ENCODE measurements at regions of chr6 and their contacts with region 1.

Region 1: DNA sequence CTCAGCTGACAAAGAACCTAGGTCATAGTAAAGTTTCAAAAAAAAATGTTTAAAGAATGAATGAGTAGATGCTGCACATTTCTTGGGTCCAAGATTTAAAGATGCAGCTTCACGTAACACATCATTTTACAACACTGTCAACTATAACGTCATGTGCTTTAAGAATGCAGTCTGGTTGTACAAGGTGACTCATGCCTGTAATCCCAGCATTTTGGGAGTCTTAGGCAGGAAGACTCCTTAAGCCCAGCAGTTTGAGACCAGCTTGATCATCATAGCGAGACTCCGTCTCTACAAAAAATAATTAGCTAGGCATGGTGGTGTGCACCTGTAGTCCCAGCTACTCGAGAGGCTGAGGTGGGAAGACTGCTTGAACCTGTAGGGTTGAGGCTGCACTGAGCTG is 21.9 kb downstream of the SLC17A5 start:
- DNase-seq: no peak
- ATAC-seq: no peak
- H3K4me3 Mint-ChIP-seq: no peak overlapping the region
- H3K27ac Mint-ChIP-seq: no peak overlapping the region
- H3K4me1 Mint-ChIP-seq: no peaks in the 10 kb centered on the region
- H3K27me3 Mint-ChIP-seq: no peaks in the 10 kb centered on the region

Region 2: DNA sequence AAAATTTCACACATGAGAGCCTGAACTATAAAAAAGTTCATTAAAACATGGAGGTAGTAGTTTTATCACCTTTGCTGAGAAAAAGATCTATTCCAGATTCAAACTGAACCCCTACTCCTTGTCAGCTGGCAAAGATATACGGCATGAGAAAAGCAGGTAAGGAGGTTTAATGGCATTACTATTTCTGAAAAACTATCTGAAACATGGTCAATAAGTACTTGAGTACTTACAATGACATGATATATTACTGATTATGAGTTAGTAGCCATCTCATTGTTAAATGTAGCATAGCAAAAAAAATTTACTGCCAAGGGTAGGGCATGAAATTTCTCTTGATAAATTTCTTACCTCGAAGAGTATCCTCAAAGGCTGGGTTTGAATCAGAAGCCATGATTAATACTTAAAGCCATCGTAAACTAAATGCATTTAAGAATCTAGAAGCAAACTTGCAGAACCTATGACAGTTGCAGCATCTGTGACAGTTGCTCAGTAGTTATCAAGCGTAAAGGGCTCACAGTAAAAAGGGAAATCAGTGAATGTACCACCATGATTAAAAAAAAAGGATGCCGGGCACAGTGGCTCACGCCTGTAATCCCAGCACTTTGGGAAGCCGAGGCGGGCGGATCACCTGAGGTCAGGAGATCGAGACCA is 13.2 kb after region 1 on chr6:
- CTCF ChIA-PET with region 1: interaction called, 10 read pairs
- POLR2A ChIA-PET with region 1: no interaction called
- intact Hi-C with region 1: no loop called
- DNase-seq: no peak
- ATAC-seq: peak; percentile 39
- H3K4me3 Mint-ChIP-seq: peak overlapping the region; percentile 77
- H3K27ac Mint-ChIP-seq: peak overlapping the region; percentile 70
- H3K4me1 Mint-ChIP-seq: peaks cover 14% of the 10 kb centered on the region
- H3K27me3 Mint-ChIP-seq: no peaks in the 10 kb centered on the region